Activated CD4-positive, alpha-beta memory T cell treated with anti-CD3 and anti-CD28 coated beads for 36 hours (primary cell): ENCODE measurements at regions of chr15 and their contacts with region 1.

Region 1: GRCh38 chr15:90598031-90598577 is 68.4 kb downstream of the CRTC3 start:
- DNase-seq: peak; percentile 41
- H3K4me3 Mint-ChIP-seq: peak overlapping the region; percentile 31
- H3K27ac Mint-ChIP-seq: peak overlapping the region; percentile 100
- H3K4me1 Mint-ChIP-seq: peaks cover 75% of the 10 kb centered on the region
- H3K27me3 Mint-ChIP-seq: no peaks in the 10 kb centered on the region

Region 2: GRCh38 chr15:89936051-89936785 is 661.9 kb before region 1 on chr15:
- CTCF ChIA-PET with region 1: no interaction called
- POLR2A ChIA-PET with region 1: no interaction called
- intact Hi-C with region 1: no loop called
- DNase-seq: peak; percentile 17
- H3K4me3 Mint-ChIP-seq: no peak overlapping the region
- H3K27ac Mint-ChIP-seq: no peak overlapping the region
- H3K4me1 Mint-ChIP-seq: peaks cover 20% of the 10 kb centered on the region
- H3K27me3 Mint-ChIP-seq: peaks cover 3% of the 10 kb centered on the region

Region 3: GRCh38 chr15:90529371-90530249 is 68.5 kb before region 1 on chr15 and contains the start of gene CRTC3:
- CTCF ChIA-PET with region 1: interaction called, 7 read pairs
- POLR2A ChIA-PET with region 1: interaction called, 4 read pairs
- intact Hi-C with region 1: loop called (anchors 2 kb)
- DNase-seq: peak; percentile 64
- H3K4me3 Mint-ChIP-seq: peak within 1 kb of the TSS; percentile 91
- H3K27ac Mint-ChIP-seq: peak within 1 kb of the TSS; percentile 81
- H3K4me1 Mint-ChIP-seq: peaks cover 39% of the 10 kb centered on the region
- H3K27me3 Mint-ChIP-seq: no peaks in the 10 kb centered on the region
- total RNA-seq, gene CRTC3: 34.7 to 37.8 TPM

Region 4: DNA sequence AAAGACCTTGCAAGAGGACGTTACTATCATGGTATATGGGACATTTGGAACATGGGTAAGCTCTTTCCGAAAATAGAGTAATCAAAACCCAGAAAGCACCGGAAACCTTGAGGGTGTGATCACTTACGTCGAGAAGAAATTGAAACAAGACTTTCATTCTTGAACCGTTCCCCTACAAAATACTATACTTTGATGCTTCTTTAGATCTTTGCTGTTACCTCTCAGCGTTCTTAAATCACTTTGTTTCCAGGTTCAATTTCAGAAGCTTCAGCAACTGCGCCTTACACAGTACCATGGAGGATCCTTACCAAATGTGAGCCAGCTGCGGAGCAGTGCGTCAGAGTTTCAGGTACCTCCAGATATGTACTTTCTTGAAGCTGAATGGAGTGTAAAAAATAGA is 58.3 kb before region 1 on chr15:
- CTCF ChIA-PET with region 1: interaction called, 5 read pairs
- POLR2A ChIA-PET with region 1: interaction called, 3 read pairs
- intact Hi-C with region 1: loop called (anchors 1 kb)
- DNase-seq: peak; percentile 67
- H3K4me3 Mint-ChIP-seq: peak overlapping the region; percentile 86
- H3K27ac Mint-ChIP-seq: peak overlapping the region; percentile 99
- H3K4me1 Mint-ChIP-seq: peaks cover 71% of the 10 kb centered on the region
- H3K27me3 Mint-ChIP-seq: no peaks in the 10 kb centered on the region

Region 5: DNA sequence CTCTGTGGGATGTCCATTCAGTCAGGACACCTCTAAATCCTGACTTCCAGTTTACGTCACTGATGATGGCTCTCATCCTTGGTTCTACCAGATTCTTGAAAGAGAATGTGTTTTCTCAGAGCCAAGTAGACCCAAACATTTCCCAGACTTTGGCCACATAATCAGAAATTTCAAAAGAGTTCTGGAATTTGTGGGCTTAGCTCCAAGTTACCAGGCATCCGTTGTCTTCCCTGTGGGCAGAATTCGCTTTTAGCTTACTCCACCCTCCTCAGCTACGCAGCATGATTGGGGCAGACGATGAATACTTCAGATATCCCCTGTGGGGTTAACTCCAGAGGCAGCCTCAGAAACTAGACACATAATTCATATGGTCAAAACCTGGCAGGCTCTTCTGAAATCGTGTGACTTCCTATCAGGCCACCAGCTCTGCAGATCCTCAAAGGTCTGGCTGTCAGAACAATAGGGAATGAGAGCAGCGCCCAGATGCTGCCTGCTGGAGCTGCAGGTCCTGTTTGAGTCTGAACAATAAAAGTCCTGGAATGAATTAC is 37.8 kb before region 1 on chr15:
- CTCF ChIA-PET with region 1: interaction called, 8 read pairs
- POLR2A ChIA-PET with region 1: no interaction called
- intact Hi-C with region 1: loop called (anchors 1 kb)
- DNase-seq: no peak
- H3K4me3 Mint-ChIP-seq: no peak overlapping the region
- H3K27ac Mint-ChIP-seq: no peak overlapping the region
- H3K4me1 Mint-ChIP-seq: peaks cover 79% of the 10 kb centered on the region
- H3K27me3 Mint-ChIP-seq: no peaks in the 10 kb centered on the region

Region 6: DNA sequence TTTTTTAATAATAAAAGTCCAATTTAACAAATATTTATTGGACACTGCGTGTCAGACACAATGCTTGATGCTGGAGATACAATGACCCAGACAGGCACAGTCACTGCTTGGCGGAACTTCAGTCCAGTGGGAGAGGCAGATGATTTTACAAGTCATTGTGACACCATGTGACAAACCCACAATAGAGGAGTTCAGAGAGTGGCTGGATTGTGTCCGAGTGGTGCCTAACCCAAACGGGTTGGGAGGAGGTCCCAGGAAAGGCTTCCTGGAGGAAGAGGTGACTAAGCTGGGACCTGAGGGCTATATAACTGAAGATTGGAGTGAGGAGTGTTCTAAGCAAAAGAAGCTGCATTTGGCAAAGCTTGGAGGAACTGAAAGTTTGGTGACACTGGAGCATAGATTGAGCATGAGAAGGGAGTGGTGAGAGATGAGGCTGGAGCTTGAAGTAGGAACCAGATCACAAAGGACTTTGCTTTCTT is 27.0 kb before region 1 on chr15:
- CTCF ChIA-PET with region 1: interaction called, 7 read pairs
- POLR2A ChIA-PET with region 1: no interaction called
- intact Hi-C with region 1: loop called (anchors 1 kb)
- DNase-seq: no peak
- H3K4me3 Mint-ChIP-seq: no peak overlapping the region
- H3K27ac Mint-ChIP-seq: no peak overlapping the region
- H3K4me1 Mint-ChIP-seq: peaks cover 66% of the 10 kb centered on the region
- H3K27me3 Mint-ChIP-seq: no peaks in the 10 kb centered on the region

Region 7: GRCh38 chr15:90660195-90660998 is 62.3 kb after region 1 on chr15:
- CTCF ChIA-PET with region 1: no interaction called
- POLR2A ChIA-PET with region 1: no interaction called
- intact Hi-C with region 1: no loop called
- DNase-seq: peak; percentile 88
- H3K4me3 Mint-ChIP-seq: peak overlapping the region; percentile 47
- H3K27ac Mint-ChIP-seq: peak overlapping the region; percentile 16
- H3K4me1 Mint-ChIP-seq: peaks cover 63% of the 10 kb centered on the region
- H3K27me3 Mint-ChIP-seq: peaks cover 54% of the 10 kb centered on the region

Region 8: GRCh38 chr15:90686435-90687218 is 88.5 kb after region 1 on chr15:
- CTCF ChIA-PET with region 1: no interaction called
- POLR2A ChIA-PET with region 1: no interaction called
- intact Hi-C with region 1: loop called (anchors 10 kb)
- DNase-seq: peak; percentile 46
- H3K4me3 Mint-ChIP-seq: no peak overlapping the region
- H3K27ac Mint-ChIP-seq: peak overlapping the region; percentile 90
- H3K4me1 Mint-ChIP-seq: peaks cover 18% of the 10 kb centered on the region
- H3K27me3 Mint-ChIP-seq: peaks cover 3% of the 10 kb centered on the region